IMR-90 (cell line): ENCODE measurements at regions of chr4 and their contacts with region 1.

Region 1: GRCh38 chr4:16443504-16444088 is 217.3 kb upstream of the TAPT1 start:
- DNase-seq: peak; percentile 52
- ATAC-seq: peak; percentile 88
- H3K4me3 ChIP-seq: no peak overlapping the region
- H3K27ac ChIP-seq: no peak overlapping the region
- H3K4me1 ChIP-seq: peaks cover under 1% of the 10 kb centered on the region; the same call in 1 of the 2 replicates
- H3K27me3 ChIP-seq: peaks cover 6% of the 10 kb centered on the region
- CTCF ChIP-seq: peak; percentile 63
- POLR2A ChIP-seq: no peak
- RAD21 ChIP-seq: peak; percentile 48

Region 2: DNA sequence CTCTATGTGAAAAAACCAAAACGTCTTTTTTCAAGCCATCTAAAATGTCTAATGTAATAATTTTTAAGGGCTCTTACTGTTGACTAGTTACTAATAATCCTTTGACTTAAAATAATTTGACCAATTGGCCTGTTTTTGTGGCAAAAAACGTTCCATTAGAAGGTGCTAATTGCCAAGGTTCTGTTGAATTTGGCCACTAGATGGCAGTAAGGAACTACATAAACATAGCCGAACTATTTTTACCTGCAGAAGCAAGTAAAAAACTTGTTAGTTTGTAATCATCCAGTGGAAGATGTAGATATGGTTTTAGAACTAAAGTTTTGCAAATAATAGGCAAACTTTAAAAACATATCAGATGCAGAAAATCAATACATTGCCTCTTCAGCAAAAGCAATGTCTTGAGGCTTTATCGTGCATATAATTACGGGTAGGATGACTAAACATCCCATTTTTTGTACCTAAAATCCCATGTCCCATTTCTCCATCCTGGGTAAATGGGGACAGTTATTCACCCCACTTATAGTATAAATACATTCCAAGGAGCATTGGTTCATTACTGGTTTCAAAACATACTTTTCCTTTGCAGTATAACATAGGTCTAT is 417.3 kb before region 1 on chr4:
- CTCF ChIA-PET with region 1: no interaction called
- POLR2A ChIA-PET with region 1: no interaction called
- dilution Hi-C with region 1: no loop called
- in situ Hi-C with region 1: no loop called
- intact Hi-C with region 1: loop called (anchors 1 kb)
- DNase-seq: peak; percentile 61
- ATAC-seq: no peak
- H3K4me3 ChIP-seq: no peak overlapping the region
- H3K27ac ChIP-seq: no peak overlapping the region
- H3K4me1 ChIP-seq: no peaks in the 10 kb centered on the region; the same call in 1 of the 2 replicates
- H3K27me3 ChIP-seq: peaks cover 29% of the 10 kb centered on the region
- CTCF ChIP-seq: peak; percentile 83
- POLR2A ChIP-seq: no peak
- RAD21 ChIP-seq: peak; percentile 77

Region 3: DNA sequence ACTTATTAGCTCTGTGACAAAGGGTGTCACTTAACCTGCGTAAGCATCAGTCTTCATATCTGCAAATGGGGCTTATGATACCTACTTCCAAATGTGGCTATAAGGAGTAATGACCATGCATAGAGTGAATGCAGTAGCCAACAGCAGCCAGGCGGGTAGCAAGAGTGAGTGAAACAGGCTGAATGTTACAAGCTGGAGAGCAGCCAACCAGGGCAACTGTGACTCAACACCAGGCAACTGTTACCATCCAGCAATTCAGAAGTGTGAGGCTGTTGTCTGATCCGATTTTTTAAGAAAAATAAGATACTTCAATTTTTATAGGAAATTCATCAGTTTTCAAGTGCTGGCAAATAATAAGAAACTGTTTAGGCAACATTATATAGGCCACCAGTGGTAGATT is 52.9 kb after region 1 on chr4:
- CTCF ChIA-PET with region 1: no interaction called
- POLR2A ChIA-PET with region 1: no interaction called
- dilution Hi-C with region 1: no loop called
- in situ Hi-C with region 1: no loop called
- intact Hi-C with region 1: loop called (anchors 1 kb)
- DNase-seq: peak; percentile 67
- ATAC-seq: peak; percentile 83; the same call in 1 of the 2 replicates
- H3K4me3 ChIP-seq: no peak overlapping the region
- H3K27ac ChIP-seq: no peak overlapping the region
- H3K4me1 ChIP-seq: no peaks in the 10 kb centered on the region
- H3K27me3 ChIP-seq: no peaks in the 10 kb centered on the region
- CTCF ChIP-seq: no peak
- POLR2A ChIP-seq: no peak
- RAD21 ChIP-seq: no peak

Region 4: DNA sequence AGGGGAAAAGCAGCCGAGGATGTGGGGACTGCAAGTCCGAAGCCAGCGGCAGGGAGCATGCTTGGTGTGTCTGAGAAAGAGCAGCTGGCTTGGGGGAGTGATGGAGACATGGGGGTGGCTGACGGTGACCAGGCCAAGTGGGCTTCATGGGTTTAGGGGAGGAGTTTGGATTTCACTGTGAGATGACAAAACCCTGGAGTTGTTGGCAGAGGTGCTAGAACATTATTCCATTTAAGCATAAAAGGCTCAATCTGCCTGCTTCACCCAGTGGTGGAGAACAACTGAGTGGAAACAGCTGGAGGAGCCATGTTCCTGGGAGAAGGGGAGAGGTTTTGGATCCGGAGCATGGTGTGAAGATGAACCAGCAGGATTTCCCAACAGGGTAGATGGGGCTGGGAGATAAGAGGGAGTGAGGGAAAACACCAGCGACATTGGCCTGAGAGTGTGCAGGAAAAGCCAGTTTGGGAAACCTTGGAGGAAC is 100.7 kb after region 1 on chr4:
- CTCF ChIA-PET with region 1: no interaction called
- POLR2A ChIA-PET with region 1: no interaction called
- dilution Hi-C with region 1: no loop called
- in situ Hi-C with region 1: no loop called
- intact Hi-C with region 1: no loop called
- DNase-seq: no peak
- ATAC-seq: peak; percentile 61; the same call in 1 of the 2 replicates
- H3K4me3 ChIP-seq: no peak overlapping the region
- H3K27ac ChIP-seq: no peak overlapping the region
- H3K4me1 ChIP-seq: no peaks in the 10 kb centered on the region
- H3K27me3 ChIP-seq: no peaks in the 10 kb centered on the region
- CTCF ChIP-seq: no peak
- POLR2A ChIP-seq: no peak
- RAD21 ChIP-seq: no peak

Region 5: DNA sequence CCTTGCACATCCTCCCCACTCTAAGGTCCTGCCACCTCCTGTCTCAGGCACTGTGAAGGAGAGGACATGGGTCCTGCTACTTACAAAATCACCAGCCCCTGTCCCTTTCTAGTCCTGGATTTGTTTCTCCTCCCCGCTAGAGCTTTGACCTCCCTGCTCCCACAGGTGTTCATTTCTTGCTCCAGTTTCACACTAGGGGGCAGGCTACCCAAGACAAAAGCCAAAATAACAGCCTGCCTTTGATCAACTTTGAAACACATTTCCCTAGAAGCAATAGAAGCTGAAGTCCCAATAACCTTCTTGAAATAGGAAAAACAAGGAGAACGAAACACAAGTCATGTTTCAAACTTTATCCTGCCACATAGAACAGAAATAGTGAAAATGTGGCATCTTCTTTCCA is 903.8 kb after region 1 on chr4:
- CTCF ChIA-PET with region 1: no interaction called
- POLR2A ChIA-PET with region 1: no interaction called
- dilution Hi-C with region 1: no loop called
- in situ Hi-C with region 1: no loop called
- intact Hi-C with region 1: loop called (anchors 10 kb)
- DNase-seq: peak; percentile 19
- ATAC-seq: peak; percentile 53
- H3K4me3 ChIP-seq: no peak overlapping the region
- H3K27ac ChIP-seq: no peak overlapping the region
- H3K4me1 ChIP-seq: no peaks in the 10 kb centered on the region
- H3K27me3 ChIP-seq: peaks cover 2% of the 10 kb centered on the region; the same call in 1 of the 2 replicates
- CTCF ChIP-seq: peak; percentile 53
- POLR2A ChIP-seq: no peak
- RAD21 ChIP-seq: peak; percentile 53